ENCODE measurements at regions of chr11 and their contacts with region 1.

Region 1: GRCh38 chr11:34907934-34908593 is 8.1 kb downstream of the APIP start:
- DNase-seq: no peak

Region 2: GRCh38 chr11:33842236-33842915 is 1065.7 kb before region 1 on chr11:
- intact Hi-C with region 1: no loop called
- DNase-seq: no peak

Region 3: DNA sequence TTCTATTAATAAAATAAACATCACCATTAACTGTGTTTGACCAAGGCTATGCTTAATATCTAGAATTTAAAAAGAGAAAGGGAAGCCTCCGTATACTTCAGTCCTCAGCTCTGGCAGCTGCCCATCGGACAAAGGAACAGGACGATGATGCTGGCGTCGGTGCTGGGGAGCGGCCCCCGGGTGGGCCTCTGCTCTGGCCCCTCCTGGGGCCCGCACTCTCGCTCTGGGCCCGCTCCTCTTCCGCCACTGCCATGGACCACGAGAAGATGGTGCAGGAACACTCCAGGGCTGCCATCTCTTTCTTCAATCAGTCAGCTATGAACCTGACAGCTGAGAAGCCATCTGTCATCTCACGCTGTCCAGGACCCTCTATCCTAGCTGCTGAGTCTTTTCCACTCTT is 33.6 kb after region 1 on chr11:
- intact Hi-C with region 1: loop called in 1 of 2 experiments (anchors 2 kb)
- DNase-seq: peak; percentile 43